Ovary (tissue), 10 donors: ENCODE measurements at regions of chr6 and their contacts with region 1.

Region 1: GRCh38 chr6:30915591-30915946 is 1.5 kb downstream of the VARS2 start:
- DNase-seq: peak in 4 of 5 donors; percentile 33 to 51 (median 40)
- H3K4me3 ChIP-seq: no peak overlapping the region
- H3K27ac ChIP-seq: peak overlapping the region; percentile 74 to 95
- H3K4me1 ChIP-seq: peaks cover 5% of the 10 kb centered on the region
- H3K27me3 ChIP-seq: no peaks in the 10 kb centered on the region
- CTCF ChIP-seq: peak in 2 of 3 donors; percentile 40 to 53
- EP300 ChIP-seq: no peak
- POLR2A ChIP-seq: no peak

Region 2: DNA sequence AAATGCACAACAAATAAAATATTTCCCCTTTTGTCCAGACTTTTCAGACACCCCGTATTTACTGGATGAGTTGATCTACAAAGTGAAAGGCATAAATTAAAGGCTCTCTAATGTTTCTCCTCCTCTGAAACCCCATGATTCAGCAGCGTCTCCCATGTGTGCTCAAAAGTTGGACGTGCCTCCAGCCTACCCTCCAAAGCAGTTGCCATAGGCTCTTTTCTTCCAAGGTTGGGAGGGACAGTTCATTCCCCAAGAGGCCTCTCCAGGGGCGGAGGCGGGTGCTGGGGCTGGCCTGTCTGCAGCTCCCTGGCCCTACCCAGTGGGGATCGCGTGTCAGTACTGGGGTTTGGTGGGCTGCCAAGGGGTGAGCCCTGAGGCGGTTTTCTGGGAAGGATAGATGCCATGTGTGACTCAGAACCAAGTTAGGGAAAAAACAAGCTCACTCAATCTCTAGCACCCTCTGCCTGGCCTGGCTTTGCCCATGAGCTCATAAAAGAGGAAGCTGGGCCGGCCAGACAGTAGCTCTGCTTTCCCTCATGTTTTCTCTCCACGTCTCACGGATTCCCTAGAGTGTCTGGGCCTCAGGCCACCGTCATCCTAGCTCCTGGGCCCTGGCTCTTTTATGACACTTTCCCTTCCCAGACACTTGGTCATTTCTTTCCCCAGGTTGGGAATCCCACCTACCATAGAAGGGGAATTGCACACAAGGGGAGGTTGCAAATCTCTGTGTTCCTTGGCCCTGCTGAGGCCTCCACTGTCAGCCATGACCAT is 163.2 kb before region 1 on chr6:
- intact Hi-C with region 1: no loop called
- DNase-seq: peak; percentile 74 to 94 (median 91)
- H3K4me3 ChIP-seq: no peak overlapping the region
- H3K27ac ChIP-seq: peak overlapping the region in 1 of 2 donors; percentile 80
- H3K4me1 ChIP-seq: peaks cover 18% of the 10 kb centered on the region
- H3K27me3 ChIP-seq: no peaks in the 10 kb centered on the region
- CTCF ChIP-seq: no peak
- EP300 ChIP-seq: no peak
- POLR2A ChIP-seq: no peak

Region 3: DNA sequence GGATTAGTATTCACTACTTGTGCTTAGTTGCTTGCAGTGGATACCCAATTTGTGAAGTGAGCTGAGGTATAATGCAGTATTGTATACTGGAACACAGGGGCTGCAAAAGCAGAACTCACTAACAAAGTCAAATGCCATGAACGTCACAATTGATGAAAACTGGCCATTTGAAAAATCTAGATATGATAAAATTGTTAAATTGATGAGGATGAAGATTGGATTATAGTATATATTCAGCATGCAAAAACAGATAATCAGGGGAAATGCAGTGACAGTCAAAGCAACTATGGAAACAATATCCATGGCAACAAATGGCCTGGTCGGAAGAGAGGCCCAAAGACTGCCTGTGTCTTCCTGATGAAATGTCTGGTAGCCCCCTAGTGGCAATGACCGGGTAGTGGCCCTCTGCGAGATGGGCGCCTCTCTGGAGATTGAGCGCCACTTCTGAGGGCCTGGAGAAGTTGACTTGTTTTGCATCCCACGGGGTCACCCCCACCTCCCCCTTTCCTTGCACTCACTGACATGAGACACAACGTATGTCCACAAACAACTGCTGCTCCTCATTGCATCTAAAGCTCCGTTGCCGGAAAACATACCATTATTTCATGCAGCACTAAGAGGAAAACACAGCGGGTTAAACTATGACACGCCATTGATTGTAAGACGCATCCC is 153.2 kb after region 1 on chr6:
- intact Hi-C with region 1: loop called (anchors 2 to 10 kb)
- DNase-seq: peak; percentile 52 to 72 (median 65)
- H3K4me3 ChIP-seq: no peak overlapping the region
- H3K27ac ChIP-seq: no peak overlapping the region
- H3K4me1 ChIP-seq: no peaks in the 10 kb centered on the region
- H3K27me3 ChIP-seq: no peaks in the 10 kb centered on the region
- CTCF ChIP-seq: peak; percentile 15 to 52 (median 41)
- EP300 ChIP-seq: no peak
- POLR2A ChIP-seq: no peak

Region 4: GRCh38 chr6:31079656-31080261 is 164.2 kb after region 1 on chr6:
- intact Hi-C with region 1: loop called in 3 of 4 experiments (anchors 5 kb)
- DNase-seq: peak; percentile 52 to 75 (median 67)
- H3K4me3 ChIP-seq: no peak overlapping the region
- H3K27ac ChIP-seq: no peak overlapping the region
- H3K4me1 ChIP-seq: peaks cover 3% of the 10 kb centered on the region
- H3K27me3 ChIP-seq: no peaks in the 10 kb centered on the region
- CTCF ChIP-seq: peak; percentile 68 to 79 (median 71)
- EP300 ChIP-seq: no peak
- POLR2A ChIP-seq: no peak